ENCODE measurements at regions of chr13 and their contacts with region 1.

Region 1: DNA sequence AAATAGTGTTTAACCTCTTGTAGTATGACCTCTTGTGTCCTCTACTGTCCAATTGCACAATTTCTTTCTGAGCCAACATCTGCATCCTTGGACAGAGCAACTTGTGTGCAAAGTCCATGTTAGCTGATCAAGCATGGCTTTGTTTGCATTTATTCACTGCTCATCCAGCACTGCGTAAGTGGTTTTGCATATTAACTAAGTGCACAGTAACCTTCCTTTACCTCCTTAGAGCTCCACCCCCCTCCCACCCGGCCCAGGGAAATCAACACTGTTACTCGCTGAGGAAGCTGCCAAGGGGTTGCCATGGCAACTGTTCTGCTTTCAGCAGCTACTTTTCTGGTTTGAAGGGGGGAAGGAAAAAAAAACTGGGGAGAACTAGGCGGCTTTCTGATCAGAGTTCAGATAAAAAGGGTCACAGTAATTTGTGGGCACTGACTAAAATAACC is 153.5 kb upstream of the KLF12 start:
- DNase-seq: no peak
- ATAC-seq: peak; percentile 55
- H3K4me3 ChIP-seq: no peak overlapping the region
- H3K27ac ChIP-seq: no peak overlapping the region
- H3K4me1 ChIP-seq: no peaks in the 10 kb centered on the region
- H3K27me3 ChIP-seq: peaks cover 2 to 5% of the 10 kb centered on the region in 2 experiments; a peak in 1 of 4 replicates
- CTCF ChIP-seq: no peak
- EP300 ChIP-seq: no peak
- POLR2A ChIP-seq: no peak
- RAD21 ChIP-seq: no peak

Region 2: GRCh38 chr13:74301258-74301935 is 13.7 kb after region 1 on chr13:
- CTCF ChIA-PET with region 1: interaction called, 10 read pairs
- POLR2A ChIA-PET with region 1: no interaction called
- RAD21 ChIA-PET with region 1: interaction called, 3 read pairs
- SMC1A ChIA-PET with region 1: no interaction called
- in situ Hi-C with region 1: no loop called
- intact Hi-C with region 1: no loop called
- DNase-seq: no peak
- ATAC-seq: no peak
- H3K4me3 ChIP-seq: no peak overlapping the region
- H3K27ac ChIP-seq: no peak overlapping the region
- H3K4me1 ChIP-seq: no peaks in the 10 kb centered on the region
- H3K27me3 ChIP-seq: no peaks in the 10 kb centered on the region
- CTCF ChIP-seq: no peak
- EP300 ChIP-seq: no peak
- POLR2A ChIP-seq: no peak
- RAD21 ChIP-seq: no peak

Region 3: GRCh38 chr13:74904556-74904955 is 616.8 kb after region 1 on chr13:
- CTCF ChIA-PET with region 1: no interaction called
- POLR2A ChIA-PET with region 1: no interaction called
- RAD21 ChIA-PET with region 1: no interaction called
- SMC1A ChIA-PET with region 1: no interaction called
- in situ Hi-C with region 1: no loop called
- intact Hi-C with region 1: no loop called
- DNase-seq: no peak
- ATAC-seq: no peak
- H3K4me3 ChIP-seq: no peak overlapping the region
- H3K27ac ChIP-seq: no peak overlapping the region
- H3K4me1 ChIP-seq: no peaks in the 10 kb centered on the region
- H3K27me3 ChIP-seq: no peaks in the 10 kb centered on the region
- CTCF ChIP-seq: no peak
- EP300 ChIP-seq: no peak
- POLR2A ChIP-seq: no peak
- RAD21 ChIP-seq: no peak

Measured in GM12878 (cell line).